AG04450 (cell line): ENCODE measurements at regions of chr12 and their contacts with region 1.

Region 1: GRCh38 chr12:89384050-89384758 is 31.9 kb upstream of the DUSP6 start:
- DNase-seq: peak; percentile 87
- H3K4me3 ChIP-seq: no peak overlapping the region
- H3K27ac ChIP-seq: peak overlapping the region; percentile 94
- H3K27me3 ChIP-seq: no peaks in the 10 kb centered on the region
- CTCF ChIP-seq: no peak

Region 2: GRCh38 chr12:89306827-89307473 is 77.3 kb before region 1 on chr12:
- CTCF ChIA-PET with region 1: no interaction called
- POLR2A ChIA-PET with region 1: interaction called, 10 read pairs
- DNase-seq: no peak
- H3K4me3 ChIP-seq: no peak overlapping the region
- H3K27ac ChIP-seq: no peak overlapping the region
- H3K27me3 ChIP-seq: no peaks in the 10 kb centered on the region
- CTCF ChIP-seq: no peak

Region 3: DNA sequence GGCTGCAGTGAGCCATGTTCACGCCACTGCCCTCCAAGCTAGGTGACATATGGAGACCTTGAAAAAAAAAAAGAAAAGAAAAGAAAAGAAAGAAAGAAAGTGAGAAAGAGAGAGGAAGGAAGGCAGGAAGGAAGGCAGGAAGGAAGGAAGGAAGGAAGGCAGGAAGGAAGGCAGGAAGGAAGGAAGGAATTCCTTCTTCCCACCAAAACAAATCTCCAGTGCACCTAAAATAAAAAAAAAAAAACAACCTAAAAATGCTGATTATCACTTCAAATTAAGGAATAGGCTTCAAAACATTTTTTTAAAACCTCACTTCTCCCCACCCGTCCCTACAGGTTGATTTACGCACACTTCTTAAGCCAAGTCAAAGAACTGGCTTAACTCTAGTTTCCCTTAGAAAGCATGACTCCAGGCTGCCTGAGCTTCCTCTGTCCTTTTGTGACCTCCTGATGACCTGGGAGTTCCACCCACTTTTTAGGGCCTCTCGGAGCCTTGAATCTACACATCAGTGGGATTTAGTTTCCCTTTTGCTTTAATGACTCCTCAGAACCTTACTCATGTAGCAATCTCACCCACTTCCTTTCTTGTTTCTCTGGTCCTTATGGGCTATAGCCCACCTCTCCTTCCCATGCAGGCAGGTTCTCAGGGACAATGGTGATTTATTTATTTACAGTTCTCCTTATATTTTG is 50.5 kb before region 1 on chr12:
- CTCF ChIA-PET with region 1: no interaction called
- POLR2A ChIA-PET with region 1: no interaction called
- DNase-seq: no peak
- H3K4me3 ChIP-seq: no peak overlapping the region
- H3K27ac ChIP-seq: no peak overlapping the region
- H3K27me3 ChIP-seq: no peaks in the 10 kb centered on the region
- CTCF ChIP-seq: no peak

Region 4: DNA sequence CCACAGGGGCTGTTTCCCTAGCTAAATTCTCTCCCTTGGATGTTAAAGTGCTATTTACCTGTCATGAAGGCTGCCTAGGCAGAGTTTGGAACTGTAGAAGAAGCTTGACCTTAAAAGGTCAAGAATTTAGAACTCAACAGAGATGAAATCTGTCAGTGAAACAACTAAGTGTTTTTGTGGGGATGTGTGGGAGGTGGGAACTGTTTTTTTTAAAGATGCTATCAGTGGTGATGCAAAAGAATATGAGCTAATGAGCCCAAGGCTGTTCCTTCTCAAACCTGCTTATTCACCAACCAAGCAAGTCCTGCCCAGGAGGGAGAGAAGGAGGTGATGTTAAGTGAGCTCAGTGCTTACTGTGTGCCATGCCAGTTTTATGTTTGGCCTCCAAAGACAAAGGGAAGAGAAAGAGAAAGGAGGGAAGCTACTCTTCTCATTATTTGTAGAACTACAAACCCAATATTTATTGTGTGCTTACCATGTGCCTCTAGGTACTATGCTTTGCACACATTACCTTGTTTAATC is 182.5 kb after region 1 on chr12:
- CTCF ChIA-PET with region 1: no interaction called
- POLR2A ChIA-PET with region 1: no interaction called
- DNase-seq: no peak
- H3K4me3 ChIP-seq: no peak overlapping the region
- H3K27ac ChIP-seq: no peak overlapping the region
- H3K27me3 ChIP-seq: no peaks in the 10 kb centered on the region
- CTCF ChIP-seq: no peak